Aorta (tissue), 5 donors: ENCODE measurements at regions of chr5 and their contacts with region 1.

Region 1: GRCh38 chr5:100535060-100536005 is at the start of gene FAM174A:
- DNase-seq: peak; percentile 97 to 98
- ATAC-seq: peak; percentile 99
- H3K4me3 ChIP-seq: peak within 1 kb of the TSS; percentile 69 to 80
- H3K27ac ChIP-seq: peak within 1 kb of the TSS; percentile 1 to 52
- H3K4me1 ChIP-seq: no peaks in the 10 kb centered on the region
- H3K27me3 ChIP-seq: no peaks in the 10 kb centered on the region
- total RNA-seq, gene FAM174A: 14.3 to 23.2 TPM

Region 2: DNA sequence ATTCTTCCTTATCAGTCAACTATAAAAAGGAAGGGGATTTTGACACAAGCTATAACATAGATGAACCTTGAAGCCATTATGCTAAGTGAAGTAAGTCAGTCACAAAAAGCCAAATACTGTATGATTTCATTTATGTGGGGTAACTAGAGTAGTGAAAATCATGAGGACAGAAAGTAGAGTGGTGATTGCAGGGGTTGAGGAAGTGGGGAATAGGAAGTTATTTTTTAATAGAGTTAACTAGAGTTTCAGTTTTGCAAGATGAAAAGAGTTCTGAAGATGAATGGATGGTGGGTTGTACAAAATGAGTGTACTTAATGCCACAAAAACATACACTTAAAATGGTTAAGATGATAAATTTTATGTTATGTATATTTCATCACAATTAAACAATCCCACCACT is 65.6 kb before region 1 on chr5:
- intact Hi-C with region 1: no loop called
- DNase-seq: no peak
- ATAC-seq: no peak
- H3K4me3 ChIP-seq: no peak overlapping the region
- H3K27ac ChIP-seq: no peak overlapping the region
- H3K4me1 ChIP-seq: no peaks in the 10 kb centered on the region
- H3K27me3 ChIP-seq: no peaks in the 10 kb centered on the region

Region 3: GRCh38 chr5:100584069-100584468 is 48.7 kb after region 1 on chr5:
- intact Hi-C with region 1: no loop called
- DNase-seq: no peak
- ATAC-seq: no peak
- H3K4me3 ChIP-seq: no peak overlapping the region
- H3K27ac ChIP-seq: no peak overlapping the region
- H3K4me1 ChIP-seq: no peaks in the 10 kb centered on the region
- H3K27me3 ChIP-seq: no peaks in the 10 kb centered on the region

Region 4: DNA sequence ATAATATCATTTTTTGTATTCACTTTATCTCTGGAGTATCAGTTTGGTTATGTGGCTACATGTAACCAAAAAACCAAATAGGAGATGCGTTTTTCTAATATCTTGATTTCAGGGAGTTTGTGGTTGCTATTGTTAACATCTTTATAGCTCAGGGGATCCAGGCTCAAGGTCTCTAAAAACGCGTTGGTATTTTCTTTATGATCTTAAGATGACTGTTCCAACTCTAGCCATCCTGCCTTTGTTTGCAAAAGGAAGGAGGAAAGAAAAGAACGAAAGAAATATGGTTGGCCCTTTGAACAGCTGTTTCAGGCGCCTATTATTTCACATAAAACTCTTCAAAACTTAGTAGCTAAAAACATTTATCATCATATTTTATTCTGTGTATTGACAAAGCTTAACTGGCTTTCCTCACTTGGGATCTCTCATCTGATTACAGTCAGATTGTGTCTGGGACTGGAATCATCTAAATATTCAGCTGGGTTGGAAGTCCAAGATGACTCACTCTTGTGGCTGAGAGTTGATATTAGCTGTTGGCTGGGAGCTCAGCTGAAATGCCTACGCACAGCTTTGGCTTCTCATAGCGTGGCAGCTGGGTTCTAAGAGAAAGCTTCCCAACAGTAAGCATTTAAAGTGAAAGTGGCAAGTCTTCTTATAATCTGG is 59.9 kb after region 1 on chr5:
- intact Hi-C with region 1: loop called in 1 of 2 experiments (anchors 10 kb)
- DNase-seq: peak in 1 of 2 donors; percentile 68
- ATAC-seq: peak; percentile 90
- H3K4me3 ChIP-seq: no peak overlapping the region
- H3K27ac ChIP-seq: no peak overlapping the region
- H3K4me1 ChIP-seq: peaks cover 0 to 2% of the 10 kb centered on the region in 2 donors
- H3K27me3 ChIP-seq: no peaks in the 10 kb centered on the region